ENCODE measurements at regions of chr2 and their contacts with region 1.

Region 1: DNA sequence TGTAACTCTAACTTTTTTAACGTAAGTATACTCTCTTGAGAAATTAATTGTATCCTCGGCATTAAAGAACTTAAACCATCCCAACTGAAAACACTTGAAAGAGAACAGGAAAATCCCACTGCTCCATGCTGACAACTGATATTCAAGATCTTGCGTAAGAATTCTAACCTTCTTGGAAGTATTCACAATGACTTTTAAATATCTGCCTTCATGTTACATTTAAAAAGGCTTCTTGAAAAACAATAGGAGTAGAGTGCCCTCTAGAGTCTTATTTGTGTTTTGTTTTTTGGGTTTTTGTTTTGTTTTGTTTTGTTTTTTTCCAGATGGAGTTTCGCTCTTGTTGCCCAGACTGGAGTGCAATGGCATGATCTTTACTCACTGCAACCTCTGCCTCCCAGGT is 65.4 kb upstream of the DNAJC10 start:
- DNase-seq: no peak
- H3K4me3 ChIP-seq: peak overlapping the region in 1 of 8 donors; percentile 20
- H3K27ac ChIP-seq: no peak overlapping the region
- H3K4me1 ChIP-seq: peaks cover 0 to 5% (median 0%) of the 10 kb centered on the region in 6 donors
- H3K27me3 ChIP-seq: no peaks in the 10 kb centered on the region
- CTCF ChIP-seq: peak in 9 of 11 experiments; percentile 14 to 73 (median 47)
- POLR2A ChIP-seq: no peak

Region 2: GRCh38 chr2:182186132-182186735 is 464.5 kb before region 1 on chr2:
- intact Hi-C with region 1: loop called (anchors 2 kb)
- DNase-seq: no peak
- H3K4me3 ChIP-seq: no peak overlapping the region
- H3K27ac ChIP-seq: no peak overlapping the region
- H3K4me1 ChIP-seq: no peaks in the 10 kb centered on the region
- H3K27me3 ChIP-seq: no peaks in the 10 kb centered on the region
- CTCF ChIP-seq: peak; percentile 59 to 87 (median 75)
- POLR2A ChIP-seq: no peak

Region 3: DNA sequence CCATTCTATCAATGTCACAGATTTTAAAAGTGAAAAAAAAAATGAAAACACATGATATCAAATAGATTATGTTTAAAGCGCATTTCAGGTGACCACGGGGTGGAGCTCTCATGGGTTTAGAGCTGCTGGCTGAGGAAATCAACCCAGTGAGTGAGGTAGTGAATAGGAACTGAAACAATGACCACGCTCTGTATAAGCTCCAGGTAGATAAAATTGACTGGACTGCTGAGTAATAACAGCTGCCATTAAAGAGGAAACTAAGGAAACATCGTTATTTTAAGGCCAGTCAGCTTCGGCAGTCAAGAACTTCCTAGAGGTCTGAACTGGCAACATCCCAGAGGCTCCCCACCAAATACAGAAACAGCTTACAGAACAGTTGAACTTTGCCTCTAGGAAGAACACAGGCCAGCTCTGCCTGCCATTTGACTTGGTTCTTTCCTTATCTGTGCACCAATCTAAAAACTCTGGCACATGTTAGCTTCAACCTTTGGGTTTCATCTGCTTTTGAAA is 409.8 kb before region 1 on chr2:
- intact Hi-C with region 1: loop called (anchors 5 kb)
- DNase-seq: no peak
- H3K4me3 ChIP-seq: no peak overlapping the region
- H3K27ac ChIP-seq: no peak overlapping the region
- H3K4me1 ChIP-seq: peaks cover 0 to 4% (median 0%) of the 10 kb centered on the region in 6 donors
- H3K27me3 ChIP-seq: no peaks in the 10 kb centered on the region
- CTCF ChIP-seq: peak in 4 of 11 experiments; percentile 21 to 42 (median 25)
- POLR2A ChIP-seq: no peak

Region 4: DNA sequence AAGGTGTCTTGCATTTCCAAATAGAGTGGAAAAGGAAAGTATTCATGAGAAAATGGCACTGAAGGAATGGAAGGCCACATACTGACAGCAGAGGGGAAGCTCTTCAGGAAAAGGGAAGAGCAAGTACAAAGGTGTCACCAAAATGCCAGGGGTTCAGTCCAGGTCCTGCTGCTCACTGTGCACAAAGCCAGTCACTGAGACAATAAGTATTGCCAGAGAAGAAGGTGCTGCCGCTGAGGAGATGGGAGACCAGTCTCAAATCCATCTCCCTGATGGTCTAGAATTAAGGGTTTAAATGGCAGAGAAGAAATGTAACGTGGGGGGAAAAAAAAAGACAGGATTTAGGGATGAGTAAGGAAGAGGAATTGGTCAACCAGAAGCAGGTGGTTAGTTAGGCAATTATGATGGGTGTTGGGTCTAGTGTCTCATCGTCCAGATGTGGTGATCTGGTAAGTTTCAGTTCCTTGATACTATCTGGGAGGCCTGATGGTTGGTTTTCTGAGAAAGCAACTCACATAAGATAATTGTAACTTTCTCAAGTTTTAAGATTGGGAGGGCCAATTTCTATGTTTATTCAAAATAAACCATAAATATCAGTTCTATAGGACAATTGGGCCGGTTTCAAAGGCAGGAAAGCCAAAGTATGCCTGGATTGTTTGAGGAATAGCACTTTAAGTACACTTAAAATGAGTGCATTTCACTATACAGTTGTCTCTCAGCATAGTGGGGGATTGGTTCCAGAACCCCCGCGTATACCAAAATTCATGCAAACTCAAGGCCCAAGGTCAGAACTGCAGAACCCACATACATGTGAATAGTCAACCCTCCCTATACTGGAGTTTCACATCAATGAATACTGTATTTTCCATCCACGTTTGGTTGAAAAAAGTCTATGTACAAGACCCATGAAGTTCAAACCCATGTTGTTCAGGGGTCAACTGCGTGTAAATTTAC is 43.7 kb before region 1 on chr2:
- intact Hi-C with region 1: no loop called
- DNase-seq: no peak
- H3K4me3 ChIP-seq: no peak overlapping the region
- H3K27ac ChIP-seq: no peak overlapping the region
- H3K4me1 ChIP-seq: no peaks in the 10 kb centered on the region
- H3K27me3 ChIP-seq: no peaks in the 10 kb centered on the region
- CTCF ChIP-seq: no peak
- POLR2A ChIP-seq: no peak

Measured in spleen (tissue), 13 donors.